Astrocyte of the cerebellum (primary cell): ENCODE measurements at regions of chr12 and their contacts with region 1.

Region 1: DNA sequence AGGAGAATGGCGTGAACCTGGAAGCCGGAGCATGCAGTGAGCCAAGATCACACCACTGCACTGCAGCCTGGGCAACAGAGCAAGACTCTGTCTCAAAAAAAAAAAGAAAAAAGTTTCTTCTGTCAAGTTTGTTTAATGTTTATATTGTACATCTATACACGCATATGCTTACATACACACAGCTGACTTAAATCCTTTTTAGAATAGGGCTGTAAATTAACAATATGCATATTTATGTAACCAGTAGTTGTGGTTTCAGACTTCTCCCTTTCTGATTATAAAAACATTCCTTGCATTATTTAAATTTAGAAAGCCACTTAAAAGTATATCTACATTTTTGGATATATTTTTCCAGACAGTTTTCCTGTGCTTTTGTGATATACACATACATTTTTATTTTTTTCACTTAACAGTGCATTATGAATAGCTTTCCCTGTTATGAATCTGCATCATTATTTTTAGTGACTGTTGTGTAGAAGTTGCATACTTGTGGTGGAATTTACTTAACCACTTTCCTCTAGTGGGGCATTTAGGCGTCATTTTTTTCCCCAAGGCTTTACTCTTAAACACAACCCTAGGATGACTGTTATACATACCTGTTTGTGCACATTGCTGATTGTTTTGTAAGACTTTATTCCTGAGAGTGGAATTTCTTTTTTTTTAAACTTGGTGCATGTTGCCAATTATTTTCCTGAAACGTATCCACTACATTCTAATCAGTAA is 29.4 kb downstream of the POLR3B start:
- DNase-seq: peak; percentile 63
- H3K4me3 ChIP-seq: no peak overlapping the region
- CTCF ChIP-seq: no peak

Region 2: GRCh38 chr12:106831699-106832098 is 444.7 kb after region 1 on chr12:
- in situ Hi-C with region 1: loop called (anchors 10 kb)
- DNase-seq: no peak
- H3K4me3 ChIP-seq: no peak overlapping the region
- CTCF ChIP-seq: no peak